ENCODE measurements at regions of chrX and their contacts with region 1.

Region 1: DNA sequence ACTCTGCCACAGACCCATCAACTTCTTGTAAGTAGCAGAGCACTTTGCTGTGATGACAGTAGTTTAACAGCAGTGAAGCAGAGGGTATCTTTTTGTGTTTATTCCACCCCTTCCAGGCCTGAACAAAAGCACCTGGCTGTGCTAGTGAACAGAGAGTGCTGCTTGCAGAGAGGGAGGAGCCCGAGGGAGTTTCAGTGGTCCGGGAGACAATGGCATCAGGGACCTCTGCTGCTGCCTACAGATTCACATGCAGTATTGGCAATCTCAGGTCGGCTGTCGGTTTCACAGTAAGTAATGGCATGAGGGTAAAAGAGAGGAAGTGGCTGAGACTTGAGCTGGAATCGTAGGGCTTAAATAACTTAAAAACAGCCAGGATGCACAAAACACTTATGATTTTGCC is 755.8 kb downstream of the RPA4 start:
- DNase-seq: no peak
- H3K4me3 Mint-ChIP-seq: no peak overlapping the region
- H3K27ac Mint-ChIP-seq: no peak overlapping the region
- H3K4me1 Mint-ChIP-seq: no peaks in the 10 kb centered on the region
- H3K27me3 Mint-ChIP-seq: no peaks in the 10 kb centered on the region
- CTCF ChIP-seq: no peak

Region 2: GRCh38 chrX:96835660-96836289 is 803.8 kb before region 1 on chrX:
- CTCF ChIA-PET with region 1: no interaction called
- intact Hi-C with region 1: loop called (anchors 10 kb)
- DNase-seq: no peak
- H3K4me3 Mint-ChIP-seq: no peak overlapping the region
- H3K27ac Mint-ChIP-seq: no peak overlapping the region
- H3K4me1 Mint-ChIP-seq: peaks cover 7% of the 10 kb centered on the region
- H3K27me3 Mint-ChIP-seq: no peaks in the 10 kb centered on the region
- CTCF ChIP-seq: no peak

Region 3: GRCh38 chrX:97471071-97471470 is 168.5 kb before region 1 on chrX:
- CTCF ChIA-PET with region 1: no interaction called
- intact Hi-C with region 1: no loop called
- DNase-seq: no peak
- H3K4me3 Mint-ChIP-seq: no peak overlapping the region
- H3K27ac Mint-ChIP-seq: no peak overlapping the region
- H3K4me1 Mint-ChIP-seq: no peaks in the 10 kb centered on the region
- H3K27me3 Mint-ChIP-seq: no peaks in the 10 kb centered on the region
- CTCF ChIP-seq: no peak

Region 4: GRCh38 chrX:97504435-97504834 is 135.1 kb before region 1 on chrX:
- CTCF ChIA-PET with region 1: no interaction called
- intact Hi-C with region 1: no loop called
- DNase-seq: no peak
- H3K4me3 Mint-ChIP-seq: no peak overlapping the region
- H3K27ac Mint-ChIP-seq: no peak overlapping the region
- H3K4me1 Mint-ChIP-seq: no peaks in the 10 kb centered on the region
- H3K27me3 Mint-ChIP-seq: no peaks in the 10 kb centered on the region
- CTCF ChIP-seq: no peak

Measured in Calu3 (cell line).